ENCODE measurements at regions of chr6 and their contacts with region 1.

Region 1: GRCh38 chr6:97282726-97283617 is at the start of gene MMS22L:
- DNase-seq: peak; percentile 93 to 96
- H3K4me3 ChIP-seq: peak within 1 kb of the TSS; percentile 64 to 99 (median 75)
- H3K27ac ChIP-seq: peak within 1 kb of the TSS in 2 of 3 donors; percentile 38 to 39
- H3K4me1 ChIP-seq: peaks cover 0 to 3% of the 10 kb centered on the region in 2 donors
- H3K27me3 ChIP-seq: no peaks in the 10 kb centered on the region
- CTCF ChIP-seq: no peak
- POLR2A ChIP-seq: no peak
- total RNA-seq, gene MMS22L: 8.6 to 13.5 (median 10.9) TPM

Region 2: GRCh38 chr6:96907498-96907897 is 375.5 kb before region 1 on chr6:
- intact Hi-C with region 1: loop called (anchors 10 kb)
- DNase-seq: no peak
- H3K4me3 ChIP-seq: no peak overlapping the region
- H3K27ac ChIP-seq: no peak overlapping the region
- H3K4me1 ChIP-seq: no peaks in the 10 kb centered on the region
- H3K27me3 ChIP-seq: no peaks in the 10 kb centered on the region
- CTCF ChIP-seq: no peak
- POLR2A ChIP-seq: no peak

Region 3: GRCh38 chr6:97231911-97232310 is 51.1 kb before region 1 on chr6:
- intact Hi-C with region 1: no loop called
- DNase-seq: no peak
- H3K4me3 ChIP-seq: no peak overlapping the region
- H3K27ac ChIP-seq: no peak overlapping the region
- H3K4me1 ChIP-seq: no peaks in the 10 kb centered on the region
- H3K27me3 ChIP-seq: no peaks in the 10 kb centered on the region
- CTCF ChIP-seq: no peak
- POLR2A ChIP-seq: no peak

Region 4: GRCh38 chr6:97437087-97437486 is 154.1 kb after region 1 on chr6:
- intact Hi-C with region 1: no loop called
- DNase-seq: no peak
- H3K4me3 ChIP-seq: no peak overlapping the region
- H3K27ac ChIP-seq: no peak overlapping the region
- H3K4me1 ChIP-seq: no peaks in the 10 kb centered on the region
- H3K27me3 ChIP-seq: no peaks in the 10 kb centered on the region
- CTCF ChIP-seq: peak in 3 of 6 experiments; percentile 36 to 62 (median 43)
- POLR2A ChIP-seq: no peak

Measured in thyroid gland (tissue), 4 donors.